Heart left ventricle (tissue), 16 donors: ENCODE measurements at regions of chr3 and their contacts with region 1.

Region 1: DNA sequence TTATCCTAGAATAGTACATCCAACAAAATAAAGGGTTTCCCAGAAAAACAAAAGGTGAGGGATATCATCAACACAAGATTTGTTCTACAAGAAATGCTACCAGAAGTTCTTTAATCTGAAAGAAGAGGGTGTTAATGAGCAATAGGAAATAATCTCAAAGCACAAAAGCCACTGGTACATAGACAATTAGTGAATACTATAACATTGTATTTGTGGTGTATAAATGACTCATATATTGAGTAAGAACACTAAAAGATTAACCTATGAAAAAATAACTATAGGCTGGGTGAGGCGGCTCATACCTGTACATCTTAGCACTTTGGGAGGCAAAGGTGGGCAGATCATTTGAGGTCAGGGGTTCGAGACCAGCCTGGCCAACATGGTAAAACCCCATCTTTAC is 210.2 kb upstream of the SLITRK3 start:
- DNase-seq: no peak
- ATAC-seq: no peak
- H3K4me3 ChIP-seq: no peak overlapping the region
- H3K27ac ChIP-seq: no peak overlapping the region
- H3K4me1 ChIP-seq: no peaks in the 10 kb centered on the region
- H3K27me3 ChIP-seq: no peaks in the 10 kb centered on the region
- CTCF ChIP-seq: no peak
- POLR2A ChIP-seq: no peak

Region 2: GRCh38 chr3:165378761-165379160 is 27.7 kb before region 1 on chr3:
- intact Hi-C with region 1: loop called in 1 of 10 experiments (anchors 2 kb)
- DNase-seq: no peak
- ATAC-seq: no peak
- H3K4me3 ChIP-seq: no peak overlapping the region
- H3K27ac ChIP-seq: no peak overlapping the region
- H3K4me1 ChIP-seq: no peaks in the 10 kb centered on the region
- H3K27me3 ChIP-seq: no peaks in the 10 kb centered on the region
- CTCF ChIP-seq: no peak
- POLR2A ChIP-seq: no peak

Region 3: DNA sequence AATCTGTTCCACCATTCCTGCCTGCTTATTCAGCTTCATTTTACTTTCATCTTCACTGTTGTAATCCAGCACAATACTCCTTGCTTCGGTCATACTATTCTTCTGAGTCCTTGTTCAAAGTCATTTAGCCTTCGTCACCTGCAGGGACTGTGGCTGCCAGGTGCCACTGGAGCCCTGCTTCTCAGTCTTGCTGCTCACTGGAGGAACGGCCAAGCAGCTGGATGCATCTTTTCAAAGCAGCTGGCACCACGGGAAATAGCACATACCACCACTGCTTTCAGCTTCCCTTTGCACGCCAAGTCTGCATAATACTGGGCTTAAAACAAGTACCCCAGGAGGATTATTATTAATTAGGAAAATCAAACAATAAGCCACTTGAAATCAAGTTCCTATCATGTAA is 143.2 kb after region 1 on chr3:
- intact Hi-C with region 1: no loop called
- DNase-seq: no peak
- ATAC-seq: no peak
- H3K4me3 ChIP-seq: no peak overlapping the region
- H3K27ac ChIP-seq: no peak overlapping the region
- H3K4me1 ChIP-seq: no peaks in the 10 kb centered on the region
- H3K27me3 ChIP-seq: no peaks in the 10 kb centered on the region
- CTCF ChIP-seq: no peak
- POLR2A ChIP-seq: no peak